Endothelial cell of umbilical vein (primary cell): ENCODE measurements at regions of chr1 and their contacts with region 1.

Region 1: DNA sequence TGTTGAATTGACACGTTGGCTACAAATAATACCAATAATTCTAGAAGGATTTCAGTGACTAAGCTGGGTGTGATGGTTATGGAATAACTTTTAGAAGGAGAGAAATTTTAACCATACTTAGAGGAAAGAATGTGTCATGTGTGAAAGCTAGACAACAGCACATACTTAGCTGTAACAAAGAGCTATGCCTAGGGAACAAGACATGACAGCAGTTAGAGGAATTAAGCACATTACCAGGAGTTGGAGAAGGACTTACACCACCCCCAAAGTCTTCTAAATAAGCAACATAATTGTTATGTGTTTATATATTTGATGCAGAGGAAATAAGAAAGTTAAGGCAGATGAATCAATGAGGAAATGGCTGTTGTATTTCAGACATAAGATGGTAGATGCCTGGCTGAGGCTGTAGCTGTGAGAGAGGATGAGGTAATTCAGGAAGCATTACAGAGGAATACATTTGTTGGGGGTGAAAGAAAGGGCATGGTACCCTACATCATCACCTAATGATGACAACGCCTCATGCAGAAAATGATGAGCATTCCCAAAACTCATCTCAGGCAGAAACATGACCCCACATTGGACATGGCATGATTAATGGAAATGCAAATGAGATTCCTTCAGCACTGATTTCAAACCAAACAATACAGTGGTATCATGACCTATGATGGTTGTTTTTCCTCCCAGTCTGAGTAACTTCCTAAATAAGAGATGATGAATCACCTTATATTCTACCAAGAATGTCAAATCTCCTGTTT is 211.5 kb downstream of the LHX8 start:
- DNase-seq: peak; percentile 95
- H3K4me3 ChIP-seq: no peak overlapping the region
- H3K27ac ChIP-seq: peak overlapping the region; percentile 94
- H3K4me1 ChIP-seq: peaks cover 27% of the 10 kb centered on the region
- H3K27me3 ChIP-seq: no peaks in the 10 kb centered on the region
- CTCF ChIP-seq: no peak
- POLR2A ChIP-seq: no peak

Region 2: DNA sequence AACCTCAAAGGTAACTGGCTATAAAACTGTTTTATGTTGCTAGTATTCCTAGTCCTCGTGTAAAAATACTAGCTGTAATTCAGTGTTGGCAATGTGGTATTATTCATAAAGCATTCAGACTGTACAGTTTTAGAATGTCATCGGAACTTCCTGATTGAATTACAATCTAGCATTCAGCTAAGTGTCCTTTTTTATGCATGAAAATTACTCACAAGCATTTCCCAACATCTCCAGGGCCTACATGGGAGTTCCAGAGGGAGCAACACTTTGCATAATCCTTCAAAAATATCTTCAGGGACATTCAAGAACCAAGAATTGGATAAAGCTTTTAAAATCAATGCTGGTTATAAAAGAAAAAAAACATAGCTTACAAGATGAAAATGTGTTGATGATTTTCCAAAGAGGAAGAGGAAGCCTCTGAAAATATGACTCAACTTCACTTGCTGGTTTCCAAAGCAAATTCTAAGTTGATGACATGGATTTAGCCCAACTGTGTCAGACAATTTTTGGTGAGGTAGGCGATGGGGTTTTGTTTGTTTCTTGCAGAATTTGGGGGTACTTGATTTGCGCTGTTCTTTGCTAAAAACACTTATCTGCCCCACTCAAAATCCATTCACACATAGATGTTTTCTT is 127.4 kb after region 1 on chr1:
- CTCF ChIA-PET with region 1: interaction called, 4 read pairs
- POLR2A ChIA-PET with region 1: no interaction called
- dilution Hi-C with region 1: no loop called
- intact Hi-C with region 1: loop called (anchors 2 kb)
- DNase-seq: peak; percentile 80
- H3K4me3 ChIP-seq: no peak overlapping the region
- H3K27ac ChIP-seq: peak overlapping the region; percentile 59
- H3K4me1 ChIP-seq: peaks cover 23% of the 10 kb centered on the region
- H3K27me3 ChIP-seq: no peaks in the 10 kb centered on the region
- CTCF ChIP-seq: no peak
- POLR2A ChIP-seq: no peak

Region 3: DNA sequence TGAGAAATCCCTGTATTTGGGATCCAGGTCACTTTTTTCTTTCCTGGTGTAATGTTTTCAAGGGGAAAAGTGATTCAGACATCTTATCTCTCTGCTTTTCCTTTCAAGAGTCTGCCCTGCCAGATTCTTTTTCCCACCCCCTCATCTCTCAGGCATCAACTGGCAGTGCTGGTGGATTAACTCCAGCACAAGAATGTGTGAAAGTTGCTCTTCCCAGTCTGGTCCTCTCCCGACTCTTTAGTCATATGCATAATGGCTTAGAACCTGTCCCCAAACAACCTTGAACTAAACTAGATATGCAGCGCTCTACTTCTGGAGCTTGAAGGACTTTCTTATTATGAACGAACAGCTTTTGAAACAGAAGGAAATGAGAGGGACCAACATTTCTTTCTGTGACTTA is 176.7 kb after region 1 on chr1:
- CTCF ChIA-PET with region 1: no interaction called
- POLR2A ChIA-PET with region 1: no interaction called
- dilution Hi-C with region 1: no loop called
- intact Hi-C with region 1: loop called (anchors 2 kb)
- DNase-seq: peak; percentile 93
- H3K4me3 ChIP-seq: peak overlapping the region in 1 of 3 experiments; percentile 28
- H3K27ac ChIP-seq: peak overlapping the region; percentile 77
- H3K4me1 ChIP-seq: peaks cover 29% of the 10 kb centered on the region
- H3K27me3 ChIP-seq: no peaks in the 10 kb centered on the region
- CTCF ChIP-seq: no peak
- POLR2A ChIP-seq: peak; percentile 26

Region 4: GRCh38 chr1:75548721-75549480 is 203.2 kb after region 1 on chr1:
- CTCF ChIA-PET with region 1: no interaction called
- POLR2A ChIA-PET with region 1: no interaction called
- dilution Hi-C with region 1: no loop called
- intact Hi-C with region 1: loop called (anchors 2 kb)
- DNase-seq: peak; percentile 86
- H3K4me3 ChIP-seq: no peak overlapping the region
- H3K27ac ChIP-seq: peak overlapping the region; percentile 23
- H3K4me1 ChIP-seq: peaks cover 30% of the 10 kb centered on the region
- H3K27me3 ChIP-seq: no peaks in the 10 kb centered on the region
- CTCF ChIP-seq: no peak
- POLR2A ChIP-seq: no peak

Region 5: GRCh38 chr1:75615613-75616435 is 270.1 kb after region 1 on chr1:
- CTCF ChIA-PET with region 1: interaction called, 11 read pairs
- POLR2A ChIA-PET with region 1: interaction called, 3 read pairs
- dilution Hi-C with region 1: no loop called
- intact Hi-C with region 1: loop called (anchors 1 kb)
- DNase-seq: peak; percentile 74
- H3K4me3 ChIP-seq: peak overlapping the region; percentile 80 to 84 (median 82)
- H3K27ac ChIP-seq: no peak overlapping the region
- H3K4me1 ChIP-seq: peaks cover 12% of the 10 kb centered on the region
- H3K27me3 ChIP-seq: peaks cover 0 to 3% of the 10 kb centered on the region in 2 experiments
- CTCF ChIP-seq: no peak
- POLR2A ChIP-seq: no peak

Region 6: DNA sequence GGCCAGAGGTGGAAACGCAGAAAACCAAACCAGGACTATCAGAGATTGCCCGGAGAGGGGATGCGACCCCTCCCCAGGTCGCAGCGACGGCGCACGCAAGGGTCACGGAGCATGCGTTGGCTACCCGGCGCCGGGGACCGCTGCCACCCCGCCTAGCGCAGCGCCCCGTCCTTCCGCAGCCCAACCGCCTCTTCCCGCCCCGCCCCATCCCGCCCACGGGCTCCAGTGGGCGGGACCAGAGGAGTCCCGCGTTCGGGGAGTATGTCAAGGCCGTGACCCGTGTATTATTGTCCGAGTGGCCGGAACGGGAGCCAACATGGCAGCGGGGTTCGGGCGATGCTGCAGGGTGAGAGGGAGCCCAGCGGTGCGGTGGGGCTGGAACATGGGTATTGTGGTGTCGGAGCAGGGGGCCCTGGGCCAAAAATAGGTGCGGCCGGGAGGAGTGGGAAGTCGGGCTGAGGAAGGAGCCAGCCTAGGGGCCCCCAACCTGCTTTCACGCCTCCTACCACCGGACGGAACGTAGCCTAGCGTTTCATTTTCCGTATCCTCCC is 378.8 kb after region 1 on chr1 and contains the start of gene ACADM:
- CTCF ChIA-PET with region 1: no interaction called
- POLR2A ChIA-PET with region 1: no interaction called
- dilution Hi-C with region 1: no loop called
- intact Hi-C with region 1: loop called (anchors 1 kb)
- DNase-seq: peak; percentile 85
- H3K4me3 ChIP-seq: peak within 1 kb of the TSS; percentile 73 to 99 (median 98)
- H3K27ac ChIP-seq: peak within 1 kb of the TSS; percentile 79
- H3K4me1 ChIP-seq: peaks cover 15% of the 10 kb centered on the region
- H3K27me3 ChIP-seq: no peaks in the 10 kb centered on the region
- CTCF ChIP-seq: no peak
- POLR2A ChIP-seq: peak; percentile 60
- total RNA-seq, gene ACADM: 32.5 and 40.4 TPM in 2 replicates

Region 7: DNA sequence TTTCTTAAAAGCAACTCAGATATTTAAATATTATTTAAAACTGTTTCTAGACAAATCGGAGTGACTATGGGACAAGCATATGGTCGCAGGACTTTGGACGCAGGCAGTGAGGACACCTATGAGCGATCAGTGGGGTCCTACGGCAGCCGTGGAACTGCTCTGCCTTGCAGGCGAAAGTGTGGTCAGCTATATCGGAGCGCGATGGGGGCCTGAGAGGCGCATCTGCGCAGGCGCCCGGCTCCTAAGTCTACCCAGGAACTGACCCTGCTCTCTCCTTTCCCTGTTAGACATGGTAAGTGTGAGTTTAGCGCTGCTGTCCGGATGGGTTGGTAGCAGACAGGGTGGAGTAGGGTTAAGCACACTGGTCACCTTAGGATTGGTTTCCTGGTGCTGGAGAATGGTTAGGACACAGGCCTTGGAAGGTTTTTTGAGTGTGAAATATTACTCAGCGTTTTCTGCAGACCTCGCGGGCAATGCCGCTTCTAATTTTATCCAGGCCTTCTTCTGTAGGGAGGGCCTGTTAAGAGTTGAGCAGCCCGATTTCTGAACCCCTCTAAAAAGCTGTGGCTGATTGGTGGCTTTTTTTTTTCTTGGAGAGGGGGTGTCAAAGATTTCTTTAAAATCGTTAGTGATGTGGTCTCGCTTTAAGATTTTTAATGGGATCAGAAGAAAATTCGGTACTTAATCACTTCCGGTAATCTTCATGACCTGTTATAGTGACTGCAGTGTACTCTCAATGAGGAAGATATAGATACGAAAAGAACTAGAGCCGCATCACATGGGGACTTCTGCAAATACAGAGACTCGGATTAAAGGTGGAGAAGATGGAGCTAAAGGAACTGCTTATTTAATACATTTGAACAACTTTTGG is 440.5 kb after region 1 on chr1 and contains the start of gene RABGGTB:
- CTCF ChIA-PET with region 1: no interaction called
- POLR2A ChIA-PET with region 1: no interaction called
- dilution Hi-C with region 1: no loop called
- intact Hi-C with region 1: loop called (anchors 5 kb)
- DNase-seq: peak; percentile 99
- H3K4me3 ChIP-seq: peak within 1 kb of the TSS; percentile 62 to 99 (median 96)
- H3K27ac ChIP-seq: peak within 1 kb of the TSS; percentile 83
- H3K4me1 ChIP-seq: peaks cover 33% of the 10 kb centered on the region
- H3K27me3 ChIP-seq: no peaks in the 10 kb centered on the region
- CTCF ChIP-seq: no peak
- POLR2A ChIP-seq: peak; percentile 100
- total RNA-seq, gene RABGGTB: 103 and 114 TPM in 2 replicates